ENCODE measurements at regions of chr3 and their contacts with region 1.

Region 1: GRCh38 chr3:9422712-9423424 is 25.5 kb downstream of the SETD5 start:
- DNase-seq: peak; percentile 60 to 90
- ATAC-seq: peak; percentile 94 to 96
- H3K4me3 ChIP-seq: peak overlapping the region; percentile 18; the same call in 1 of the 3 replicates
- H3K27ac ChIP-seq: peak overlapping the region; percentile 85 to 87
- H3K4me1 ChIP-seq: peaks cover 68% of the 10 kb centered on the region
- CTCF ChIP-seq: peak; percentile 60
- EP300 ChIP-seq: no peak
- POLR2A ChIP-seq: no peak
- RAD21 ChIP-seq: peak; percentile 59 to 61

Region 2: DNA sequence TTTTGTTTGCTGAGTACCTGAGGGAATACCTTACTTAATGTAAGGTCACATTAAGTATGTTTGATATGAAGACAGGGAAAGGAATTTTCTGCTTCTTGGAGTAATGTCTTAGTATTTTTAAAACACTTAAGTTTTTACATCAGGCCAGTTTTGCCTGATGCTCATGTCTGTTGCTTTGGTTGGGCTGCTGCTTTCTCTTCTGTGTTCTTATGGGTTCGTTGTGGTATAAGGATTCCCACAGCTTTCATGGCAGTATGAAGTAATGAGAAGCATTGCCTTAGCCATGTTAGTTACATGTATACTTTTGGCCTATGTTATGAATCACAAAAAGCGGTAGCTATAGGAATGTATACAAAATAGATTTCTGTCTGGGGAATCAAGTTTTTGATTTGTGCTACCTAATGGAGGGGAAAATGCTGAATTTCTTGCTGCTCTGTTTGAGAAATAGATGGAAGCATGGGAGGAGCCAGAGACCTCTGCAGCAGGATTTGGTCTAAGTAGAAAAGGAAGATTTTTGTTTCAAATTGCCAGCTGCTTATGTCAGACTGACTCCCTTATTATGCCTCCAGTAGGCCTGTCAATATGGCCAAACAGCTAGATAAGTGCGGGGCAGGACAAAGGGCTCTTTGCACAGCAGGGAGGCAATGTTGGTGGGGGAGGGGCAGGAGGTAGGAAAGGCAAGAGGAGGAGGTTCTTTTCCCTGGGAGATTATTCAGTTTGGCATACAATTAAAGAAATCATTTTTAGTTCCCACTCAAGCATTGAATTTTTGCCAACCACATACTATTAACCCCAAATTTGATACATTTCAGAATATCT is 20.2 kb before region 1 on chr3:
- CTCF ChIA-PET with region 1: interaction called, 22 read pairs
- POLR2A ChIA-PET with region 1: interaction called, 62 read pairs
- DNase-seq: peak in 1 of 2 experiments; percentile 42
- ATAC-seq: peak in 1 of 2 experiments; percentile 7; a peak in 1 of 6 replicates
- H3K4me3 ChIP-seq: peak overlapping the region; percentile 84
- H3K27ac ChIP-seq: peak overlapping the region; percentile 21 to 65; a peak in 5 of 6 replicates
- H3K4me1 ChIP-seq: peaks cover 73% of the 10 kb centered on the region
- CTCF ChIP-seq: no peak
- EP300 ChIP-seq: no peak
- POLR2A ChIP-seq: no peak
- RAD21 ChIP-seq: no peak

Region 3: DNA sequence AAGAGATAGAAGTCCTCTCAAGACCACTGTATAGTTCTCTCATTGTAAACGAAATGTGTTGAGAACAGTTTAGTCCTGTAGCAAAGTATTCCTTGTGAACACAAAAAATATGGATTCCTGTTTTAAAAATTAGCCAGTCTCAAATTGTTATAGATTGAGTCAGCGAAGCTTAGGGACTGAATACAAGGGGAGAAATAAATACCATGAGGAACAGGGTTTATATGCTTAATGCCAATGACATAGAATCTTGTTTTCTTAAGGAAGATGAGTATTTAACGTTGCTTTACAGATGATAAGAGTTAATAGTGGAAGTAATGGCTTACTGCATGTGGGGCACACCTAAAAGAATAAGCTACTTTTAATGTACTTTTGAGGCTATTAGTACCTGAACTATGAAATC is 12.4 kb after region 1 on chr3:
- CTCF ChIA-PET with region 1: interaction called, 10 read pairs
- POLR2A ChIA-PET with region 1: no interaction called
- DNase-seq: no peak
- ATAC-seq: no peak
- H3K4me3 ChIP-seq: no peak overlapping the region
- H3K27ac ChIP-seq: no peak overlapping the region
- H3K4me1 ChIP-seq: peaks cover 27% of the 10 kb centered on the region
- CTCF ChIP-seq: no peak
- EP300 ChIP-seq: no peak
- POLR2A ChIP-seq: no peak
- RAD21 ChIP-seq: no peak

Region 4: GRCh38 chr3:9455596-9456131 is 32.8 kb after region 1 on chr3:
- CTCF ChIA-PET with region 1: no interaction called
- POLR2A ChIA-PET with region 1: no interaction called
- DNase-seq: no peak
- ATAC-seq: no peak
- H3K4me3 ChIP-seq: no peak overlapping the region
- H3K27ac ChIP-seq: no peak overlapping the region
- H3K4me1 ChIP-seq: no peaks in the 10 kb centered on the region
- CTCF ChIP-seq: no peak
- EP300 ChIP-seq: no peak
- POLR2A ChIP-seq: no peak
- RAD21 ChIP-seq: no peak

Measured in A549 (cell line).